ENCODE measurements at regions of chr20 and their contacts with region 1.

Region 1: DNA sequence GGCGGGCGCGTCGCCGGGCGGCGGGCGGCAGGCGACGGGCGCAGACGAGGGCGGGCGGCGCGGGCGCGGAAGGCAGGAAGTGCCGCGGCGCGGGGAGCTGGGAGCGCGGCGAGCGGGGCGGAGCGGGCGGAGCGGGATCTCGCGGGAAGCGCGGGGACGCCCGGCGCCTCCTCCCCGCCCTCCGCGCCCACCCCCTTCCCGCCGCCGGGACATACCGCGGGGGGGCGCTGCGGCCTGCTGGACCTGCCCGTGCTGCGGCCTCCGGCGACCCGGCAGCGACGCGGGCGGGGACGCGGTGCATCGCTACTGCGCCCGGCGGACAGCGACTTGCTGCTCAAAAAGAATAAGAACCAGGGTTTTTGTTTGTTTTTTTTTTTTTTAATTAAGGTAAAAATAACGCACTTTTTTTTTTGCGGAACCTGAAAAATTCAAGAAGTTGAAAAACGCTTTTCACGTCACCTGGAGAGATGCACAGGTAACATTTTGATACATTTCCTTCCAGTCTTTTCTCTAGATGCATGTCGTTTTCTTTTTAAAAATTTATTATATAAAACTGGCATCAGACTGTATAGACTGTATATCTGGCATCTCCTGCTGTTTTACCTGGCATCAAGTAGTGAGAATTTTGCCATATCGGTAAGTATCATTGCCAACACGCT is at the start of gene CENPB:
- DNase-seq: no peak
- ATAC-seq: peak; percentile 89
- H3K4me3 ChIP-seq: peak within 1 kb of the TSS; percentile 65 to 75
- H3K27ac ChIP-seq: peak within 1 kb of the TSS; percentile 87
- H3K4me1 ChIP-seq: peaks cover 21% of the 10 kb centered on the region
- H3K27me3 ChIP-seq: no peaks in the 10 kb centered on the region
- CTCF ChIP-seq: peak; percentile 98
- total RNA-seq, gene CENPB: 154 TPM

Region 2: GRCh38 chr20:3820048-3820900 is 33.5 kb after region 1 on chr20 and contains the start of gene AP5S1:
- CTCF ChIA-PET with region 1: interaction called, 22 read pairs
- POLR2A ChIA-PET with region 1: interaction called, 12 read pairs
- in situ Hi-C with region 1: no loop called
- intact Hi-C with region 1: loop called (anchors 2 kb)
- DNase-seq: peak; percentile 88
- ATAC-seq: peak; percentile 91
- H3K4me3 ChIP-seq: peak within 1 kb of the TSS; percentile 60 to 74
- H3K27ac ChIP-seq: peak within 1 kb of the TSS; percentile 89
- H3K4me1 ChIP-seq: peaks cover 23% of the 10 kb centered on the region
- H3K27me3 ChIP-seq: no peaks in the 10 kb centered on the region
- CTCF ChIP-seq: peak; percentile 99
- total RNA-seq, gene AP5S1: 23.1 TPM

Region 3: DNA sequence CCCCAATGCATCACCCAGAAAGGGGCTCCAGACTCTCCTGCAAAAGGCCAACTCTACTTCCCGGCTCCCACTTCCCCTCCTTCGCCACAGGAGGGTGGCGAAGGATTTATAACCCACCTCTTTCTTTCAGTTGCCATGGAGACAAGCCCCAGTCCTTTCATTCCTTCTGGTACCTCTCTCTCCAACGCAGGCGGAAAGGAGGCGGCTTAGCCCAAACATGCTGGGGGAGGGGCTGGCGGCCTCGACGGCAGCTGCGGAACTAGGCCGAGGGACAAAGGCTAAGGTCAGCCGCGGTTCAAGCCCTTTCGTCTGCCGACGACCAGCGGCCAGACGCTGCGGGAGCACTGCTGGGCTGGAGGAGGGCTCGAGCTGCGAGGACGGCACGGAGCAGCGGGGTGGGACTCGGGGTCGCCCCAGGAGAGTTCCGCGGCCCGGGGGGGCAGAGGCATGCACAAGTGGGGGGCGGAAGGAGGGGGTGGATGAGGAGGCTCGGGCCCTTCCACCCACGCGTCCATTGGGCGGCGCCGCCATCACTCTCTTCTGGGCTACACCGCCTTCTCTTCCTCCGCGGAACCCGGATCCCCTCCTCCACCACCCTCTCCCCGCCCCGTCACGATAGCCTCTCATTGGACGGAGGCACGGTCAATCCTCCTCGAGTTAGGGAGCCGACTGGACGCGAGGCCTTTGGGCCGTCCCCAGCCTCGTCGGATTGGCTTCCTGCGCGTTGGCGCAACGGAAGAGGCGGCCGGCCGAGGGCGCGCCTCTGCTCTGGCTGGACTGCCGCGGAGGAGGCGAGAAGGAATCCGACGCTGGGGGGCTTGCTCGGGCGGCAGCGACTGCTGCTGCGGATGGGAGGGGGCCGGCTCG is 102.1 kb after region 1 on chr20 and contains the start of gene PANK2:
- CTCF ChIA-PET with region 1: no interaction called
- POLR2A ChIA-PET with region 1: no interaction called
- in situ Hi-C with region 1: no loop called
- intact Hi-C with region 1: no loop called
- DNase-seq: peak; percentile 96
- ATAC-seq: peak; percentile 97
- H3K4me3 ChIP-seq: peak within 1 kb of the TSS; percentile 86 to 98
- H3K27ac ChIP-seq: peak within 1 kb of the TSS; percentile 98
- H3K4me1 ChIP-seq: peaks cover 28% of the 10 kb centered on the region
- H3K27me3 ChIP-seq: no peaks in the 10 kb centered on the region
- CTCF ChIP-seq: no peak
- total RNA-seq, gene PANK2: 40.9 TPM